Colonic mucosa (tissue), 4 donors: ENCODE measurements at regions of chr7 and their contacts with region 1.

Region 1: DNA sequence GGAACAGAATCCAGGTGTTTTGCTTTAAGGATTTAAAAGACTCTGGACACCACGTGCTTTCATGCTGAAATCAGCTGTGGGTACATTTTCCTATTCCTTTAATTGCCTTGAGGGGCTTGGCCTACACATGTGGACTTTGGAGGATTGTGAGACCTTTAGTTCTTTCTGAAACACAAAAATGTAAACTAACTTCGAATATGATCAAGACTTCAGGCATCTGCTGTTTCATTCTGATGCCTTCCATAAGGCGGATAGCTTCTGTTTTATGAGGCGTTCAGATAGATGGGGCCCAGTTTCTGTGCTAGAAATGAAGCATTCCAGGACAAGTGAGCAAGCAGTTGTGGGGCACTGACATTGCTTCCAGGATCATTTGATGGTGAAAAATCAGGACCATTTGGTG is 1.5 kb upstream of the NOBOX start:
- DNase-seq: no peak
- H3K4me3 ChIP-seq: no peak overlapping the region
- H3K27ac ChIP-seq: no peak overlapping the region
- H3K4me1 ChIP-seq: no peaks in the 10 kb centered on the region
- H3K27me3 ChIP-seq: no peaks in the 10 kb centered on the region
- CTCF ChIP-seq: no peak

Region 2: DNA sequence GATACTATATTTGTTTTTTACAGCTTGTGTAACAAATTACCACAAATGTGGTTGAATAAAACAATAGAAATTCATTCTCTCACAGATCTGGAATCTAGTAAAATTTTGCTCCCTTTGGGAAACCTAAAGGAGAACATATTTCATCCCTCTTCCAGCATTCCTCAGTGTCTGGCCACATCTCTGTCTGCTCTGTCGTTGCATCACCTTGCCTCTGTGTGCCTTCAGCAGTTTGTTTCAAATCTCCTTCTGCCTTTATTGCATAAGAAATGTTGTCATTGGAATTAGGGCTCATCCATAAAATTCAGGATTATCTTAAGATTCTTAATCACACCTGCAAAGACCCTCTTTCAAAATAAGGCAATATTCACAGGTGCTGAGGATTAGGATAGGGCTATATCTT is 267.4 kb before region 1 on chr7:
- intact Hi-C with region 1: no loop called
- DNase-seq: no peak
- H3K4me3 ChIP-seq: no peak overlapping the region
- H3K27ac ChIP-seq: no peak overlapping the region
- H3K4me1 ChIP-seq: no peaks in the 10 kb centered on the region
- H3K27me3 ChIP-seq: no peaks in the 10 kb centered on the region
- CTCF ChIP-seq: no peak

Region 3: DNA sequence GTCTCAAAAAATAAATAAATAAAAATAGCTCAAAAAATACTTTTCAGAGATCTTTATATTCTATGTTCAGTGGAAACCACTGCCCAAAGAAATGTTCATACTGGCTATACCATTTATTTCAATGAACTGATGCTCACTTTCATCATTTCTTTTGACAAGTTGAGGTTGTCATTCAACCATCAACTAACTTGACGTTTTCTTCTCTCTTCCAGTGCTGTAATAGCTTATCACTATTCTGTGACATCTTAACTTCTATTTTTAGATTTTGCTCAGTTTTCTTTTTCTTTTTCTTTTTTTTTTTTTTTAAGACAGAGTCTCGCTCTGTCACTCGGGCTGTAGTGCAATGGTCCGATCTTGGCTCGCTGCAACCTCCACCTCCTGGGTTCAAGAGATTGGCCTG is 230.3 kb before region 1 on chr7:
- intact Hi-C with region 1: loop called (anchors 5 kb)
- DNase-seq: no peak
- H3K4me3 ChIP-seq: no peak overlapping the region
- H3K27ac ChIP-seq: no peak overlapping the region
- H3K4me1 ChIP-seq: no peaks in the 10 kb centered on the region
- H3K27me3 ChIP-seq: no peaks in the 10 kb centered on the region
- CTCF ChIP-seq: no peak